GM13976 (cell line): ENCODE measurements at regions of chr5 and their contacts with region 1.

Region 1: DNA sequence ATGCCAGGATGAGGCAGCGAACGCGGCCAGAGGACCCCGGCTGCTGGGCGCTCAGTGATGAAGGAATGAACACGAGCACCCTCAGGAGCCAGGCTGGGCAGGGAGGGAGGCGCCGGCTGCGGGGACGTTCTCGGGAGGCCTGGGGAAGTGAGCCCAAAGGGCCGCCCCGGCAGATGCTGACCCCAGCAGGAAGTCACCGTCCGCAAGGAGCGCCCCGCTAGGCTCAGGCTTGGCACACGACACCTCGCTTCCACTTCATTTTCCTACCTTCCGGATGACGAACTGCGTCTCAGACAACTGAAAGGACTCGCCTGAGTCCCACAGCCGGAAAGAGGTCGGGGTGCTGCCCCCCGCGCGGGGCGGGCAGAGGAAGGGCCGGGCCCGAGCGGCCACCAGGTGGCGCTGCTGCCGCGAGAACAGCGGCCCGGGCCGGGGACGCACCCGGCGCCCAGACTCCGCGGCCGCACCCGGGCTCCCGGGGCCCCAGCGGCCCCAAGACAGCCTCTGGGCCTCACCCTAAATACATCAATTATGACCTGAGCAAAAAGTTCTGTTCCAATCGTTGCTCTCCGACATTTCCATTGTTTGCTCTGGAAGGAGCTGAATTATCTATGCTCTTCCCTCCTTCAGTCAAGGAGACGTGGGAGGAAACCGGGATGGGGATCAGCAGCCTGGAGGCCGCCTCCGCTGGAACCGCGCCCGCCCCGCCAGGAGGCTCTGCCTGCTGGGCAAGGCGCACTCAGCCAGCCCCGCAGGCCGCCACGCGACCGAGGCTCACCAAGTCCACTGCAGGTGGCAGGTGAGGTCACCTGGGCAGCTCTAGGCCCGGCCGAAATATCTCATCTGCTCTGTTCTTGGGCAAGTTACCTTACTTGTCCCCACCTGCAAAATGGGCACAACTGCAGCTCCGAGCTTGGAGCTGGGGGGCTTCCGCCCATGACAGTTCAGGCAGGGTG is 107.0 kb downstream of the ZNF354C start:
- DNase-seq: peak; percentile 77
- CTCF ChIP-seq: peak; percentile 57

Region 2: GRCh38 chr5:179495906-179496455 is 328.8 kb after region 1 on chr5:
- in situ Hi-C with region 1: loop called (anchors 25 kb)
- DNase-seq: no peak
- CTCF ChIP-seq: peak; percentile 16